ENCODE measurements at regions of chr22 and their contacts with region 1.

Region 1: GRCh38 chr22:40177738-40178416 is at the start of gene TNRC6B:
- DNase-seq: peak; percentile 76
- H3K4me3 ChIP-seq: peak within 1 kb of the TSS; percentile 52 to 86 (median 64)
- H3K27ac ChIP-seq: peak within 1 kb of the TSS; percentile 63 to 89 (median 85)
- H3K4me1 ChIP-seq: peaks cover 29 to 78% (median 64%) of the 10 kb centered on the region in 6 donors
- H3K27me3 ChIP-seq: no peaks in the 10 kb centered on the region
- CTCF ChIP-seq: peak in 2 of 11 experiments; percentile 8 to 24
- POLR2A ChIP-seq: peak; percentile 77 to 99 (median 96)
- total RNA-seq, gene TNRC6B: 85.1 to 221 (median 103) TPM

Region 2: DNA sequence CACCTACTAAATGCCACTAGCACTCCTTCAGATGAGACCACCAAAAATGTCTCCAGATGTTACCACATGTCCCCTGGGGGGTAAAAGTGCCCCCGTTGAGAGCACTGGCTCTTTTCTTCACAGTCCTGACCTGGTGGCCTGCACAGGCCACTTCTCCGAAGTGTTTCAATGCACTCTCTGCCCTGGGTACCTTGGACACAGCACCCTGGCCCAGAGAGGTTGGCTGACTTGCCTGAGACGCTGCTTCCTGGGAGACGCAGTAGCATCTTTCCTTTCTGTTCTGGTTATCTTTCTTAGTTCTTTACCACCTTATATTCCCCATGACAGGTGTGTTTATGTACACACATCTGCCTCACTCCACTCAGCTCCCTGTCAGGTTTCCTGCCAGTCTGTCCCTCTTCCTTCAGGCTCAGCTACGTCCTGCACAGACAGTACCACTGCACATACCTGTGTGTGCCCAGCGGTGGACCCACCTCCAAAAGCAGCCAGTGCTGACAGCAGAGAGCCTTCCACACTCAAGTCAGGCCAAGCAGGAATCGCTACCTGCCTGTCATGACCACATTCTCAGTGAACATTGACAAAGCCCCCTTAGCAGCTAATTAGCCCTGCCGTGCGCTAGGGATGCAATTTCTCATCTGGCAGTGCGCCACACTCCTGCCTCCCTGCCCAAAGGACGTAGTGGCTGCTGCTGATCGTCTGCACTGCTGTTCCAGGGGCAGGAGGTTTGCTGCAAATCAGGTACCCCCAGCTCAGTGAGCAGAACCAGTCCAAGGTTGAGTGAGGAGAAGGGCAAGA is 144.1 kb before region 1 on chr22:
- intact Hi-C with region 1: no loop called
- DNase-seq: peak; percentile 54
- H3K4me3 ChIP-seq: no peak overlapping the region
- H3K27ac ChIP-seq: no peak overlapping the region
- H3K4me1 ChIP-seq: peaks cover 0 to 10% (median 0%) of the 10 kb centered on the region in 6 donors
- H3K27me3 ChIP-seq: peaks cover 0 to 35% (median 0%) of the 10 kb centered on the region in 7 donors
- CTCF ChIP-seq: no peak
- POLR2A ChIP-seq: no peak

Region 3: DNA sequence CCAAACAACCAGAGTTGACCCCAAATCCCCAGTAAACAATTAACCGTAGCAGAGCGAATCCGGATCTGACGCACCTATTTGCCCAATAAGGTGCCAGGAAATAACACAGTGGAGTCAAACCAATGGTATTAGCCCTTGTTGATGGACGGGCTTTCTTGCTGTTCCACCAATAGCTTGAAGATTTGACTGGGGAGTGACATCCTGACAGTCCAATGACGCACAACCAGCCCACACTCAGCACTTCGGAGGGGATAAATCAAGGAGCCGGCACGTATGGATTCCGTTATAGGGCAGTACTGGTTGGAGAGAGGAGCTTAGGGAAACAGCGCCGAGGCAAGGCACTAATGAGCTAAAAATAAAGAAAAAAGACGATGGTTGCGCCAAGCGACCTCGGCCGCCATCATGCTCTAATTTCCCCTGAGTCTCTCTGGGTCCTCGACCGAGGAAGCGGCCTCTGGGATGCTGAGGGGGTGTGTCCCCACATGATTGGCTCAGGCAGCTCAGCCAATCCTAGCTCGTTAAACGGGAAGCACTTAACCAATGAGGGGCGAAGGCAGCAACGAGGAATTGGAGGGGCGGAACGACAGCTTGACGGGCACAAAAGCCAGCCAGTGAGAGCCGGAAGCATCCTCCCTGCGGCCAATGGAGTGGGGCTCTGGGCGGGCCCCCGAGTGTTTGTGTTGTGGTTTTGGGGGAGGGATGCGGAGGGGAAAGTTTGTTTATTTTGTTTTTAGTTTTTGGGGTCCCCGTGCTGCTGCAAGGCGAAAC is 133.6 kb before region 1 on chr22:
- intact Hi-C with region 1: loop called (anchors 5 kb)
- DNase-seq: peak; percentile 96
- H3K4me3 ChIP-seq: peak overlapping the region; percentile 71 to 89 (median 83)
- H3K27ac ChIP-seq: peak overlapping the region; percentile 97 to 100 (median 98)
- H3K4me1 ChIP-seq: peaks cover 30 to 81% (median 53%) of the 10 kb centered on the region in 6 donors
- H3K27me3 ChIP-seq: peaks cover 0 to 15% (median 0%) of the 10 kb centered on the region in 7 donors
- CTCF ChIP-seq: peak in 3 of 11 experiments; percentile 9 to 38 (median 30)
- POLR2A ChIP-seq: peak in 1 of 3 donors; percentile 69

Measured in spleen (tissue), 13 donors.